Mammary epithelial cell (primary cell): ENCODE measurements at regions of chr21 and their contacts with region 1.

Region 1: GRCh38 chr21:33608559-33608958 is 20.1 kb upstream of the DONSON start:
- DNase-seq: no peak
- H3K4me3 ChIP-seq: no peak overlapping the region
- H3K27ac ChIP-seq: no peak overlapping the region
- H3K4me1 ChIP-seq: no peaks in the 10 kb centered on the region
- H3K27me3 ChIP-seq: no peaks in the 10 kb centered on the region
- CTCF ChIP-seq: no peak

Region 2: DNA sequence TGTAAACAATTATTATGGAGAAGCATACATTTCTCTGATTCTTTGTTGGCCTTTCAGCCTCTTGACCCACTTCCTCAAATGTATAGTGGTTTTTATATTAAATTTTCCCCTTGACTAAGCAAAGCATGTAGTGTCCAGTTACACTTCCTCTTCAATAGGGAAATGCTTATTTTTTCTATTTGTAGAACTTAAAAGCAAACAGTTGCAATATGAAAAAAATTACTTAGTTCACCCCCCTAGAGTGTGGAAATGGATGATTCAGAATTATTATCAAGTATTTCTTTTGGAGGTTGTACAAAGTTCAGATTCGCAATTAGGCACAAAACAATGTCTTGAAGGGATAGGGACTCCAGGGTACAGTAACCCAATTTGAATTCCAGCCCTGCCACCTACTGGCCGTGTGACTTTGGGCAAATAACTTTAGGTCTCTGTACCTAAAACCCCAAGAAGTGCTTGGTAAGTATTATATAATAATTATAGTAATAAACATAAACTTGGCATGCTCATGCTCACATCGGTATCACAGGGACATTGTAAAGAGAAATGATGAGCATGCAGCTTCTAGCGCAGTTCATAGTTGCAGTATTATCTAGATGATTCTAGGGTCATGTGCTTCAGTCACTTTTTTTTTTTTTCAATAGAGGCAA is 234.0 kb before region 1 on chr21:
- CTCF ChIA-PET with region 1: no interaction called
- dilution Hi-C with region 1: no loop called
- in situ Hi-C with region 1: no loop called
- intact Hi-C with region 1: loop called (anchors 10 kb)
- DNase-seq: peak; percentile 55
- H3K4me3 ChIP-seq: no peak overlapping the region
- H3K27ac ChIP-seq: no peak overlapping the region
- H3K4me1 ChIP-seq: peaks cover 27% of the 10 kb centered on the region
- H3K27me3 ChIP-seq: no peaks in the 10 kb centered on the region
- CTCF ChIP-seq: peak; percentile 59 to 72

Region 3: DNA sequence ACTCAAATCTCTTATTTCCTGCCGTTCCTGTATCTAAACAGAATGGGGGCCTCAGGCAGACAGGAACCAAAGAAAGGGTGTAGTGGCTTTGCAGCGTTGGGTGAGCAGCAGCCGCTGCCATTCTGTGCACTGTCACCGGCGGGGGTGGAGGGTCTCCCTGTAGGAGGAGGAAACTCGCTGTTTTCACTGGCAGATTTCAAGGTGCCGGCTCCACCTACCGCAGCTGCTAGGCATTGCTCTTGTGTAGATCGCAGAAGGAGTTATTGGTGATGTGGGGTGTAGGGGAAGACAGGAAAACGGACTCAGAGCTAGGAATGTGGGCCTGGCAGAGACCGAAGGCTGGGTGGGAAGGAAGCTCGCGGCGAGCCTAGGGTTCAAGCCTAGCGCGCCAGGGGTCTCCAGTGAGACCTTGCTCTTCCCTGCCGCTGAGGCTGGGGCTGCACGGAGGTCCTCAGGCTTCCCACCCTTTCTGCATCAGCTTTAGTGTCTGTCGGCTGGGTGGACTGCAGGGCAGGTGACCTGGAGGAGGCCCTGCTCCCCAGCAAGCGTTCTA is 286.3 kb after region 1 on chr21:
- CTCF ChIA-PET with region 1: interaction called, 4 read pairs
- dilution Hi-C with region 1: no loop called
- in situ Hi-C with region 1: no loop called
- intact Hi-C with region 1: loop called (anchors 1 kb)
- DNase-seq: peak; percentile 63
- H3K4me3 ChIP-seq: peak overlapping the region in 1 of 3 experiments; percentile 8
- H3K27ac ChIP-seq: no peak overlapping the region
- H3K4me1 ChIP-seq: peaks cover 6% of the 10 kb centered on the region
- H3K27me3 ChIP-seq: no peaks in the 10 kb centered on the region
- CTCF ChIP-seq: peak; percentile 72 to 91